GM12878 (cell line): ENCODE measurements at regions of chr9 and their contacts with region 1.

Region 1: DNA sequence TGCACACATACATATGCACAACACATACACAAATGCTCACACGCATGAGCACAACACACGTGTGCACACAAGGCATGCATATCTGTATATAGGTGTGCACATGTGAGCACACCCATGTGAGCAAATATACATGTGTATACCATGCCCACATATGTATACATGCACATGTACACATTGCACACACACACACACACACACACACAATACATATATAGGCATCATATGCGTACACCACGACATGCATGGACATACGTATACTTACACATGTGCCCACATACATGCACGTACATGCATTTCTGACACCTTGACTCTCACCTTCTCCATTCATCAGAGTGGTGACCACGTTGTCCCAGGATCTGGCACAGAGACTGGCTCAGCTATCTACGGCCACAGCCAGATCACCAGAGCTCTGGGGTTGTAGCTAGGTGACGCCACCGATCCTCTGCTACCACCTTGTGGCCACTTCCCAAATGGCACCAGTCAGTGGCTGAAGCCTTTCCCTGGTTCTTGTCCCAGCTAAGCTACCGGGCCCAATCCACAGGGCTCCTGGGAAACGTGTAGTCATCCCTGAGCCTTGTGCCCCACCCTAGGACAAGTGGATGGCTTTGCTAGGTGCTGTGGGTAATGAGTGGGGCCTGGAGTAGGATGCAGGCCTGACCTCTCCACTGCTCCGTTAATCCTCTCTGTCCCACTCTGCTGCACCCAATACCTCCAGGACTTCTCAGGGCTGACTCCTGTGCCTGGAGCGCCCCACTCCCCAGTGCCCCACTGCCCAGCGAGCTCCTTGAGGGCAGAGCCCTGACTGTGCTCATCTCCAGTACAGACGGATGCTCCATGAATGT is 194.4 kb downstream of the RGS3 start:
- DNase-seq: peak; percentile 39
- ATAC-seq: peak; percentile 96
- H3K4me3 ChIP-seq: no peak overlapping the region
- H3K27ac ChIP-seq: no peak overlapping the region
- H3K4me1 ChIP-seq: no peaks in the 10 kb centered on the region
- H3K27me3 ChIP-seq: 0 out of 4 replicates have a peak, but pooled peaks cover 0 to 1% of the 10 kb centered on the region in 2 experiments
- CTCF ChIP-seq: peak; percentile 95 to 98 (median 96)
- EP300 ChIP-seq: no peak
- POLR2A ChIP-seq: no peak
- RAD21 ChIP-seq: peak; percentile 95

Region 2: GRCh38 chr9:113231701-113232100 is 426.2 kb before region 1 on chr9:
- CTCF ChIA-PET with region 1: no interaction called
- POLR2A ChIA-PET with region 1: no interaction called
- RAD21 ChIA-PET with region 1: no interaction called
- SMC1A ChIA-PET with region 1: no interaction called
- in situ Hi-C with region 1: no loop called
- intact Hi-C with region 1: no loop called
- DNase-seq: no peak
- ATAC-seq: no peak
- H3K4me3 ChIP-seq: no peak overlapping the region
- H3K27ac ChIP-seq: no peak overlapping the region
- H3K4me1 ChIP-seq: peaks cover 9% of the 10 kb centered on the region
- H3K27me3 ChIP-seq: no peaks in the 10 kb centered on the region
- CTCF ChIP-seq: no peak
- EP300 ChIP-seq: no peak
- POLR2A ChIP-seq: no peak
- RAD21 ChIP-seq: no peak

Region 3: DNA sequence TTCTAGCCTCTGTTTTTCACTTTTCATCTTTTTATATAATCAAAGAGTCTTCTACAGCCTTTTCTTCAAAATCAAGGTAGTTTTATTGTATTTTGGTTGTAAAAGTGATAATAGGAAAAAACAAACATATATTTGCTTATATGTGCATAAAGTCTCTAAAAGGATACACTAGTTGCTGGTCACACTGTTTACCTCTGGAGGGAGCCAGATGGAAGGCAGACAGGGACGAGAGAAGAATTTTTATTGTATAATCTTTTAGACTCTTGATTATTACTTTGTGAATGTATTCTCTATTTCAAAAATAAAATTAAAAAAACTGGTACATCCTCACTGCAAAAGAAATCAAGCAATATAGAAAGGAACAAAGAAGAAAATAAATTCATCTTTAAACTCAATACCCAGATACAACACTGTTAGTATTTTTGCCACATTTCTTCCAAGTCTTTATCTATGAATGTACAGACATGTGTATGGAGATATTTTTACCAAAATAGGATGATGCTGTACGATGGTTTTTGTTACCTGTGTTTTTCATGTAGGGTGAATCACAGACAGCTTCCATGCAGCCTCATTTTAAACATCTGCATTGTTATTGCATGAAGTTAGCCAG is 348.6 kb before region 1 on chr9:
- CTCF ChIA-PET with region 1: interaction called, 6 read pairs
- POLR2A ChIA-PET with region 1: no interaction called
- RAD21 ChIA-PET with region 1: interaction called, 7 read pairs
- SMC1A ChIA-PET with region 1: interaction called, 5 read pairs
- in situ Hi-C with region 1: no loop called
- intact Hi-C with region 1: loop called (anchors 2 kb)
- DNase-seq: no peak
- ATAC-seq: peak; percentile 65
- H3K4me3 ChIP-seq: no peak overlapping the region
- H3K27ac ChIP-seq: no peak overlapping the region
- H3K4me1 ChIP-seq: no peaks in the 10 kb centered on the region
- H3K27me3 ChIP-seq: no peaks in the 10 kb centered on the region
- CTCF ChIP-seq: peak; percentile 56 to 73 (median 62); a peak in 5 of 6 replicates
- EP300 ChIP-seq: no peak
- POLR2A ChIP-seq: no peak
- RAD21 ChIP-seq: peak; percentile 91

Region 4: DNA sequence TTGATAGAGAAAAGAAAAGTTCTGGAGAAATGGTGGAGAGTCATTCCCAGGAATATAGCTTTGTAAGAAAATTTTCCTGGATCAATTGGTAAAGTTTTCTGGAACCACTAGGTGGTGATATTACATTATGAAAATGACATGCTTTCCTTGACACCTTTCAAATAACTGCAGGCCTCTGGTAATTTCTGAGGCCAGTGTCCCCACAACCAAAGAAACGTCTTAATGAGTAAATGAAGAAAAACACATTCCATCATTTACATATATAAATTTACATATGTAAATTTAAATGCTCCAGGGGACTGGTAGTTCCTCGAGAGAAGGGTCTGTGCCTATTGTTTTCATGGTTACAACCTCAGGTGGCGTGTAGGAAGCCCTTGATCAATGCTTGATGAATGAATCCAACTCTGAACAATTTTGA is 211.6 kb before region 1 on chr9:
- CTCF ChIA-PET with region 1: interaction called, 384 read pairs
- POLR2A ChIA-PET with region 1: interaction called, 5 read pairs
- RAD21 ChIA-PET with region 1: interaction called, 247 read pairs
- SMC1A ChIA-PET with region 1: interaction called, 245 read pairs
- in situ Hi-C with region 1: loop called (anchors 5 kb)
- intact Hi-C with region 1: loop called (anchors 1 kb)
- DNase-seq: peak; percentile 25
- ATAC-seq: peak; percentile 80
- H3K4me3 ChIP-seq: no peak overlapping the region
- H3K27ac ChIP-seq: no peak overlapping the region
- H3K4me1 ChIP-seq: no peaks in the 10 kb centered on the region
- H3K27me3 ChIP-seq: no peaks in the 10 kb centered on the region
- CTCF ChIP-seq: peak; percentile 42 to 69 (median 50); a peak in 5 of 6 replicates
- EP300 ChIP-seq: no peak
- POLR2A ChIP-seq: no peak
- RAD21 ChIP-seq: peak; percentile 81

Region 5: DNA sequence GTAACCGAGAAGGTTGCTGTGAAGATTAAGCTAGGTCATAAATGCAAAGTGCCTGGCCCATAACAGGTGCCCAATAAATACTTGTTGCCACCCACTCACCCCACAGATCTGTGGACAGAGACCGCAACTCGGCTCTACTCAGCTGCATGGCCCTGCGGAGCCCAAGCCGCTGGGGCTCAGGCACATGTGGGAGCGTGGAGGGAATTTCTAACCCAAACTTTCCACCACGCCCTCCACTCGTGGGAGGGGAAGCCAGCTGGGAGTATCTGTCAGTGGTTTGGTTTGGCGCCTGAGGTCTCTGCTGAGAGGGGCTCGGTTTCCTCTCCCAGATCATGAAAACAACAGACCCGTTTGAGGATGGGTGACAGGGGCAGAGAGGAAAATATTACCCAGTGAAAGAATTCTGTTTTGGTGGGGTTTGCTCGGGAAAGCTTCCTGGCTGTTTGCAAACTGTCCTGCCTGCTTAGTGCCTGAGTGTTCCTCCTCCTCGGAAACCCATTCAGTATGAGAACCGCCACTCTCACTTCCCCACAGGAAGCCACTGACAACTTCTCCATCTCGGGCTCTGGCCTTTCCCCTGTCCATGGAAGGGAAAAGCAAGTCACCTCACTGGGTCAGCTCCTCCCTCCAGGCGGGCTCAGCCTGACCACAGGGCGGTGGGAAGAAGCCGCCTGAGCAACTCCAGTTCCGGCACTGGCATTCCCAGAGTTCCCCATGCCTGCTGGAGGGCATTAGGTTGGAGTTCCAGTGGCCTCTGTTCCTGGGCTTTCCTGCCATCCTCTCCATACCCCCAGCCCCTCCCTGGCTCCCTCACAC is 134.3 kb before region 1 on chr9:
- CTCF ChIA-PET with region 1: interaction called, 112 read pairs
- POLR2A ChIA-PET with region 1: no interaction called
- RAD21 ChIA-PET with region 1: interaction called, 13 read pairs
- SMC1A ChIA-PET with region 1: interaction called, 67 read pairs
- in situ Hi-C with region 1: loop called (anchors 5 kb)
- intact Hi-C with region 1: loop called (anchors 2 kb)
- DNase-seq: peak; percentile 85
- ATAC-seq: peak; percentile 75
- H3K4me3 ChIP-seq: peak overlapping the region; percentile 61
- H3K27ac ChIP-seq: peak overlapping the region; percentile 78
- H3K4me1 ChIP-seq: peaks cover 38% of the 10 kb centered on the region
- H3K27me3 ChIP-seq: no peaks in the 10 kb centered on the region
- CTCF ChIP-seq: no peak
- EP300 ChIP-seq: peak in 1 of 2 experiments; percentile 66; a peak in 3 of 4 replicates
- POLR2A ChIP-seq: 0 out of 2 replicates have a peak, but pooled peaks have one; percentile 30
- RAD21 ChIP-seq: no peak; the same call in 1 of the 2 replicates

Region 6: DNA sequence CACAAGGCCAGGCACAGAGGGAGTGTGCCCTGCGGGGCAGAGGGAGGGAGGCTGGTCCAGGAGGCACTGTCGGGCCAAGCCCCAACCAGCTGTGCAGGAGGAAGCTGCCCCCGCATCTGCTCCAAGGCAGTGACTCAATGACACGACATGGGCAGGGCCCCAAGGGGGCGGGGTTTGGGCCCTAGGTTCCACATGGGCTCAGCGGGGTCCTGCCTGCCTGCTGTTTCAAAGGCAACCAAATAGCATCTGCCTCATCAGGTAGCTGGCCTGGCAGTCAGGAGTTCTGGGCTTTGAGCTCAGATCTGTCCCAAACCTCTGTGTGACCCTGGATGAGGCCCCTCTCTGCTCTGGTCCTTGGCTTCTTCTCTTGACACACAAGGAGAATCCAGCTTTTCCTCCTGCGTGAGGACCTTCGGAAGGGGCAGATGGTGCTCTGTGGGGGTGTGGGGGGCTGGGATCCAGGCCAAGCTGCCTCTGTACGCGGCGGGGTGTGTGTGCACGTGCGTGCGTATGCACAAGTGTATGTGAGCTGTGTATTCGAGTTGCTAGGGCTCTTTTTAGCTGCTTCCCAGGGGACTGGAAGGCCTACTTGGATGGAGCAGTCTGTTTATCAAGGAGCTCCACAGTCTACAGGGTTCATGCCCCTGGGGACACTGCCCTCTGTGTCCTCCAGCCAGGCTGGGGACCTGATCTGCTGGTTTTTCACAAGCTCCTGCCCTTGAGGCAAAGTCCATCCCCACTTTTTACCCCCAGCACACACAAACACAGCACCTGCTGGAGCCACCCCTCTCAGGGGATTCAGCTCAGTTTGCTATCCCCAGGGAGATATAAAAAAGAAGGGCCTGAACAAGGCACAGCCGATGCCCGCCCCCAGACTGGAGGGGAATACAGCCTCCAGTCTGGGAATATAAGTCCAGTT is 55.5 kb before region 1 on chr9:
- CTCF ChIA-PET with region 1: interaction called, 565 read pairs
- POLR2A ChIA-PET with region 1: no interaction called
- RAD21 ChIA-PET with region 1: interaction called, 22 read pairs
- SMC1A ChIA-PET with region 1: interaction called, 28 read pairs
- in situ Hi-C with region 1: loop called (anchors 5 kb)
- intact Hi-C with region 1: no loop called
- DNase-seq: no peak
- ATAC-seq: peak; percentile 86
- H3K4me3 ChIP-seq: no peak overlapping the region
- H3K27ac ChIP-seq: no peak overlapping the region
- H3K4me1 ChIP-seq: peaks cover 7% of the 10 kb centered on the region; the same call in 1 of the 2 replicates
- H3K27me3 ChIP-seq: no peaks in the 10 kb centered on the region
- CTCF ChIP-seq: no peak
- EP300 ChIP-seq: no peak
- POLR2A ChIP-seq: no peak
- RAD21 ChIP-seq: no peak

Region 7: GRCh38 chr9:113669522-113670115 is 11.7 kb after region 1 on chr9:
- CTCF ChIA-PET with region 1: interaction called, 18 read pairs
- POLR2A ChIA-PET with region 1: no interaction called
- RAD21 ChIA-PET with region 1: interaction called, 3 read pairs
- SMC1A ChIA-PET with region 1: interaction called, 27 read pairs
- in situ Hi-C with region 1: no loop called
- intact Hi-C with region 1: no loop called
- DNase-seq: no peak
- ATAC-seq: peak; percentile 26; the same call in 1 of the 3 replicates
- H3K4me3 ChIP-seq: no peak overlapping the region
- H3K27ac ChIP-seq: no peak overlapping the region
- H3K4me1 ChIP-seq: no peaks in the 10 kb centered on the region
- H3K27me3 ChIP-seq: peaks cover 0 to 3% of the 10 kb centered on the region in 2 experiments; a peak in 1 of 4 replicates
- CTCF ChIP-seq: no peak
- EP300 ChIP-seq: no peak
- POLR2A ChIP-seq: no peak
- RAD21 ChIP-seq: no peak